ENCODE measurements at regions of chr2 and their contacts with region 1.

Region 1: GRCh38 chr2:113889471-113890252 is at the start of gene ACTR3:
- DNase-seq: peak; percentile 99
- H3K4me3 Mint-ChIP-seq: peak within 1 kb of the TSS; percentile 91
- H3K27ac Mint-ChIP-seq: peak within 1 kb of the TSS; percentile 96
- H3K4me1 Mint-ChIP-seq: peaks cover 49% of the 10 kb centered on the region
- H3K27me3 Mint-ChIP-seq: no peaks in the 10 kb centered on the region
- CTCF ChIP-seq: no peak
- total RNA-seq, gene ACTR3: 260 and 311 TPM in 2 replicates

Region 2: GRCh38 chr2:113342650-113343049 is 547.0 kb before region 1 on chr2:
- CTCF ChIA-PET with region 1: no interaction called
- POLR2A ChIA-PET with region 1: no interaction called
- intact Hi-C with region 1: no loop called
- DNase-seq: no peak
- H3K4me3 Mint-ChIP-seq: no peak overlapping the region
- H3K27ac Mint-ChIP-seq: no peak overlapping the region
- H3K4me1 Mint-ChIP-seq: peaks cover 7% of the 10 kb centered on the region
- H3K27me3 Mint-ChIP-seq: no peaks in the 10 kb centered on the region
- CTCF ChIP-seq: no peak

Region 3: DNA sequence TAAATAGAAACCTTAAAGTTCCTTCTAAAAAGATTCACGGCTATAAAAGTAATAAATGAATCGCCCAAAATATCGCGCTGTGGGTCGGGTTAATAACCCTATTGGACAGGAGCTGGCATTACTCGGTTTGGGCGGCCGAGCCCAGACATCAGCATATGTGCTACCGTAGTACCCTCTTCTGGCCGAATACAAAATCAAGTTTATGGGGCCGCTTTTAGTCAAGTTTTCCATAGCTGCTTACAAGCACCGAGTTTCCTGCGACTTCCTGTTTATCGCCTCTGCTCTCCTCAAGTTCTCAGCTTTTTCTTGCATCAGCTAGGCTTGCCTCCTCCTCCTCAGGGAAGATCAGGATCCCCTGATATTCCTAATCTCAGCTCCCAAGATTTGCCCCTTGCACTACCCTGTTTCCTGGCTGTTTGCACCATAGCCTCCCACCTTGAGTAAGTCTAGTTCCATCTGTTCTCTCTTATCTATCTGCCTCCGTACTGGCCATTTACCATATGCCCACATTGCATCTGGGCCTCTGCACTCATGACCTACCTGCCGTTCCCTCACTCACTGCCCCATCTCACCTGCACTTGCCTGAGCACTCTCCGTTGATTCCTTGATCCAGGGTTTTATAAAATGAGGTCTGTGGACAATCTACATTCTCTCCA is 189.3 kb before region 1 on chr2:
- CTCF ChIA-PET with region 1: no interaction called
- POLR2A ChIA-PET with region 1: no interaction called
- intact Hi-C with region 1: no loop called
- DNase-seq: no peak
- H3K4me3 Mint-ChIP-seq: no peak overlapping the region
- H3K27ac Mint-ChIP-seq: no peak overlapping the region
- H3K4me1 Mint-ChIP-seq: peaks cover 6% of the 10 kb centered on the region
- H3K27me3 Mint-ChIP-seq: no peaks in the 10 kb centered on the region
- CTCF ChIP-seq: no peak

Region 4: GRCh38 chr2:113818382-113818951 is 71.2 kb before region 1 on chr2:
- CTCF ChIA-PET with region 1: no interaction called
- POLR2A ChIA-PET with region 1: interaction called, 8 read pairs
- intact Hi-C with region 1: loop called (anchors 5 kb)
- DNase-seq: peak; percentile 93
- H3K4me3 Mint-ChIP-seq: peak overlapping the region; percentile 45
- H3K27ac Mint-ChIP-seq: peak overlapping the region; percentile 17
- H3K4me1 Mint-ChIP-seq: peaks cover 14% of the 10 kb centered on the region
- H3K27me3 Mint-ChIP-seq: no peaks in the 10 kb centered on the region
- CTCF ChIP-seq: no peak

Region 5: GRCh38 chr2:113842919-113843736 is 46.5 kb before region 1 on chr2:
- CTCF ChIA-PET with region 1: interaction called, 5 read pairs
- POLR2A ChIA-PET with region 1: interaction called, 49 read pairs
- intact Hi-C with region 1: loop called (anchors 2 kb)
- DNase-seq: peak; percentile 81
- H3K4me3 Mint-ChIP-seq: peak overlapping the region; percentile 0
- H3K27ac Mint-ChIP-seq: peak overlapping the region; percentile 43
- H3K4me1 Mint-ChIP-seq: peaks cover 12% of the 10 kb centered on the region
- H3K27me3 Mint-ChIP-seq: no peaks in the 10 kb centered on the region
- CTCF ChIP-seq: no peak

Region 6: GRCh38 chr2:113848758-113849415 is 40.8 kb before region 1 on chr2:
- CTCF ChIA-PET with region 1: interaction called, 5 read pairs
- POLR2A ChIA-PET with region 1: interaction called, 49 read pairs
- intact Hi-C with region 1: no loop called
- DNase-seq: peak; percentile 83
- H3K4me3 Mint-ChIP-seq: no peak overlapping the region
- H3K27ac Mint-ChIP-seq: peak overlapping the region; percentile 29
- H3K4me1 Mint-ChIP-seq: peaks cover 12% of the 10 kb centered on the region
- H3K27me3 Mint-ChIP-seq: no peaks in the 10 kb centered on the region
- CTCF ChIP-seq: no peak

Region 7: GRCh38 chr2:113876503-113877387 is 12.9 kb before region 1 on chr2:
- CTCF ChIA-PET with region 1: interaction called, 4 read pairs
- POLR2A ChIA-PET with region 1: interaction called, 47 read pairs
- intact Hi-C with region 1: no loop called
- DNase-seq: peak; percentile 84
- H3K4me3 Mint-ChIP-seq: no peak overlapping the region
- H3K27ac Mint-ChIP-seq: no peak overlapping the region
- H3K4me1 Mint-ChIP-seq: peaks cover 19% of the 10 kb centered on the region
- H3K27me3 Mint-ChIP-seq: no peaks in the 10 kb centered on the region
- CTCF ChIP-seq: no peak

Region 8: GRCh38 chr2:113901943-113902342 is 12.3 kb after region 1 on chr2:
- CTCF ChIA-PET with region 1: no interaction called
- POLR2A ChIA-PET with region 1: interaction called, 13 read pairs
- intact Hi-C with region 1: no loop called
- DNase-seq: no peak
- H3K4me3 Mint-ChIP-seq: no peak overlapping the region
- H3K27ac Mint-ChIP-seq: peak overlapping the region; percentile 55
- H3K4me1 Mint-ChIP-seq: peaks cover 38% of the 10 kb centered on the region
- H3K27me3 Mint-ChIP-seq: no peaks in the 10 kb centered on the region
- CTCF ChIP-seq: no peak

Region 9: GRCh38 chr2:114550895-114551793 is 661.5 kb after region 1 on chr2:
- CTCF ChIA-PET with region 1: interaction called, 3 read pairs
- POLR2A ChIA-PET with region 1: interaction called, 3 read pairs
- intact Hi-C with region 1: loop called (anchors 2 kb)
- DNase-seq: peak; percentile 62
- H3K4me3 Mint-ChIP-seq: no peak overlapping the region
- H3K27ac Mint-ChIP-seq: no peak overlapping the region
- H3K4me1 Mint-ChIP-seq: no peaks in the 10 kb centered on the region
- H3K27me3 Mint-ChIP-seq: peaks cover 39% of the 10 kb centered on the region
- CTCF ChIP-seq: peak; percentile 78